Ascending aorta (tissue), 2 donors: ENCODE measurements at regions of chr2 and their contacts with region 1.

Region 1: DNA sequence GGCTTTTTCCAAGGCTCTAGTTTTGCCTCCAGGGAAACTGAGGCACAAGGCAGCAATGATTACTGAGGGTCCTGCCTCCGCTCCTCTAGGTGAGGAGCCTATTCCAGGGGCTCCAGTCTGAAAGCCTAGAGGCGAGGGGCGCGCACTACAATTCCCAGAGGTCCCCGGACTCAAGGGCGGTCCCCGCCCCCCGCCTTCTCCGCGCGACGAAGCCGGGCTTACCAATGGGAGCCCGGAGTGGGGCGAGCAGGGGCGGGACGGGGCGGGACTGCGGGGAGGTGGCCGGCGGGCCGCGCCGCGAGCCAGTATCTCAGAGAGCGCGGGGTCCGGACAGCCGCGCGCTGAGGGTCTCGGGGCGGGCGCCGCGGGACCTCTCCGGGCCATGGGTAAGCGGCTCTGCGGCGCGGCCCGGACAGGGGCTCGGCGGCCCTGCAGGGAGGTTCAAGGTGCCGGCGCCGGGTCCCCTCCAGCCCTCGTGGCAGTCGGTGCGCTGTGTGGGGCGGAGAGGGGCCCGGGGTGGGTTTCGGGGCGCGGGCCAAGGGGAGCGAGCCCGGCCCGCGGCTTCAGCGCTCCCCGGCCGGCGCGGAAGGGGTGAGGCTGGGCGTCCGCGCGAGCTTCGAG is at the start of gene ARID5A:
- DNase-seq: peak; percentile 87 to 98
- H3K4me3 ChIP-seq: peak within 1 kb of the TSS; percentile 83 to 99
- H3K27ac ChIP-seq: peak within 1 kb of the TSS; percentile 96 to 99
- H3K4me1 ChIP-seq: peaks cover 28 to 66% of the 10 kb centered on the region in 2 donors
- H3K27me3 ChIP-seq: no peaks in the 10 kb centered on the region
- CTCF ChIP-seq: peak; percentile 40 to 47 (median 46)
- total RNA-seq, gene ARID5A: 267 TPM

Region 2: GRCh38 chr2:96374211-96374951 is 162.2 kb before region 1 on chr2:
- intact Hi-C with region 1: no loop called
- DNase-seq: peak in 1 of 2 donors; percentile 86
- H3K4me3 ChIP-seq: no peak overlapping the region
- H3K27ac ChIP-seq: no peak overlapping the region
- H3K4me1 ChIP-seq: peaks cover 3 to 11% of the 10 kb centered on the region in 2 donors
- H3K27me3 ChIP-seq: no peaks in the 10 kb centered on the region
- CTCF ChIP-seq: no peak

Region 3: GRCh38 chr2:96554293-96555145 is 18.0 kb after region 1 on chr2:
- intact Hi-C with region 1: loop called (anchors 2 kb)
- DNase-seq: peak in 1 of 2 donors; percentile 89
- H3K4me3 ChIP-seq: peak overlapping the region in 1 of 2 donors; percentile 43
- H3K27ac ChIP-seq: peak overlapping the region in 1 of 2 donors; percentile 20
- H3K4me1 ChIP-seq: peaks cover 0 to 3% of the 10 kb centered on the region in 2 donors
- H3K27me3 ChIP-seq: no peaks in the 10 kb centered on the region
- CTCF ChIP-seq: peak; percentile 96 to 98 (median 98)

Region 4: DNA sequence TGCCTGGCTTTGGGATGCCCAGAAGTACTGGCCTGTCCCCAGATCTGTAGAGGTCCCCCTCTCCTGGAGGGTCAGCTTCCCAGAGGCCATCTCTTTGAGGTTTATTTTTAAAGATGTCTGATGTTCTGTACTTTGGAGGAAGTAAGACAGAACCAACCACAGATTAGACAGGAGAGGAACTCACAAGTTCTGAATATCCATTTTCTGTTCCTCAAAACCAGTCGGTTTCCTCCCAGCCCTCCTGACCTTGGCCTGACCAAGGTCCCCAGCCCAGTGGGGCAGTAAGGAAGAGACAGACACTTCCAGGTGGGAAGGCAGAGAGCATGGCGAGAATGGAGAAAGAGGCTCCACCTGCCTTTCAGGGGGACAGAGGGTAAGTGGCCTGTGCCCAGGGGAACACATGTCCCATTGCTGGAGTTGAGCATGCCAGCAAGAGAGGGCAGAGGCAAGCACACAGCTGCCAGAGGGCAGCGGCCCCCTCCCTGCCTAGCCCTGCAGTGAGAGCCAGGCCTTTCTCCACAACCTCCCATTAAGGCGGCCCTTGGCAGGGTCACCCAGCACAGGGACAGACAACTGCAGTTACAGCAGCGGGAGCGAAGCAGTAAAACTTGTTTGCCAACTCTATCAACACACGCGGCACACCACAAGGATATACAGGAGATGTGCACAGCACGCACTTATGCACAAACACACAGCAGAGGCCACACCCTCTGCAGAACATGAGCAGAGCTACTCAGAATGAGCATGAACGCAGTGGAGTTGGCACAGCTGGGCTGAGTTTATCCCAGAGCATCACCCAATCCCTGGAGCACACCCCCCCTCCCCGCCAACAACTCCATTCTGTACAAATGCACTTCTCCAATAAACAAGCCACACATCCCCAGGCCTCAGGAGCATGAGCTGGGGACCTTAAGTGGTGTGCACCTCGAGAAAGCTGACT is 351.8 kb after region 1 on chr2:
- intact Hi-C with region 1: no loop called
- DNase-seq: no peak
- H3K4me3 ChIP-seq: peak overlapping the region in 1 of 2 donors; percentile 36
- H3K27ac ChIP-seq: peak overlapping the region; percentile 72 to 78
- H3K4me1 ChIP-seq: peaks cover 25 to 48% of the 10 kb centered on the region in 2 donors
- H3K27me3 ChIP-seq: no peaks in the 10 kb centered on the region
- CTCF ChIP-seq: no peak